PC-9 (cell line): ENCODE measurements at regions of chr21 and their contacts with region 1.

Region 1: GRCh38 chr21:43728467-43729390 is 9.8 kb downstream of the PDXK start:
- DNase-seq: peak; percentile 78 to 87
- H3K4me3 ChIP-seq: peak overlapping the region; percentile 44; the same call in 1 of the 2 replicates
- H3K27ac ChIP-seq: peak overlapping the region; percentile 80
- H3K4me1 ChIP-seq: peaks cover 56% of the 10 kb centered on the region
- H3K27me3 ChIP-seq: no peaks in the 10 kb centered on the region
- CTCF ChIP-seq: no peak

Region 2: GRCh38 chr21:43574741-43575472 is 153.8 kb before region 1 on chr21:
- CTCF ChIA-PET with region 1: no interaction called
- POLR2A ChIA-PET with region 1: no interaction called
- intact Hi-C with region 1: no loop called
- DNase-seq: no peak
- H3K4me3 ChIP-seq: no peak overlapping the region
- H3K27ac ChIP-seq: no peak overlapping the region
- H3K4me1 ChIP-seq: no peaks in the 10 kb centered on the region
- H3K27me3 ChIP-seq: no peaks in the 10 kb centered on the region
- CTCF ChIP-seq: no peak

Region 3: GRCh38 chr21:43659136-43660000 is 69.4 kb before region 1 on chr21 and contains the starts of genes HSF2BP and RRP1B:
- CTCF ChIA-PET with region 1: no interaction called
- POLR2A ChIA-PET with region 1: no interaction called
- intact Hi-C with region 1: loop called (anchors 5 kb)
- DNase-seq: peak; percentile 55 to 73
- H3K4me3 ChIP-seq: peak within 1 kb of the TSS; percentile 91
- H3K27ac ChIP-seq: peak within 1 kb of the TSS; percentile 65
- H3K4me1 ChIP-seq: peaks cover 30% of the 10 kb centered on the region
- H3K27me3 ChIP-seq: no peaks in the 10 kb centered on the region
- CTCF ChIP-seq: no peak
- total RNA-seq, gene HSF2BP: 4.6 and 7.3 TPM in 2 replicates
- total RNA-seq, gene RRP1B: 26.1 and 26.3 TPM in 2 replicates

Region 4: DNA sequence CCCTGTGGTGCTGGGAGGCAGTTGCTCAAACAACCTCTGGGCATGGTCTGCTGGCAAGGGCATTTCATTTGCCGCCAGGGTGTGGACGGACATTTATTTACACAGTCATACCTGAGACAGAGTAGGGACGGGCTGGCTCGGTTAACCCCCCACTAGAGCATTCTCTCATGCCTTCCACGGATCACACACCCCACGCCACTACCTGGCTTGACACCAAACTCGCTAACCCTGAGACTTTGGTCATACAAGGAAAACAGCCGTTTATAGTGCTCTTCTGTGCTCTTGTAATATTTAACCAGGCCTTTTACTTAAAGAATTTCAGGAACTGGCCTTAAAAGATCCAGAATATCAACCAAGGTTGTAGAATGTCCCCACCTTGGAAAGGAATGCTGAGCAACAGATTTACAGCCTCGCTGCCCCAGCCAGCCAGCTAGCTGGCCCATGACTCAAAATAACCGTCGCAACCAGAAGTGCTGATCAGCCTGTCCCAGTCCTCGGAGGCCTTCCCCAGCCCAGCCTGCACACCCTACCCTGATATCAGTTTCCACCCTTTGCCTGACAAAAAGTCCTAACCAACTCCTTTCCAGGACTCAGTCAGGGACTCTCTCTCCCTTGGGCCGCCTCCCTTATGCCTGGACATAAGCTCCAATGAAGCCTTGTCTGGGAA is 16.3 kb before region 1 on chr21:
- CTCF ChIA-PET with region 1: interaction called, 4 read pairs
- POLR2A ChIA-PET with region 1: interaction called, 29 read pairs
- intact Hi-C with region 1: no loop called
- DNase-seq: peak; percentile 84 to 94
- H3K4me3 ChIP-seq: peak overlapping the region; percentile 72; the same call in 1 of the 2 replicates
- H3K27ac ChIP-seq: peak overlapping the region; percentile 100
- H3K4me1 ChIP-seq: peaks cover 29% of the 10 kb centered on the region
- H3K27me3 ChIP-seq: no peaks in the 10 kb centered on the region
- CTCF ChIP-seq: no peak

Region 5: DNA sequence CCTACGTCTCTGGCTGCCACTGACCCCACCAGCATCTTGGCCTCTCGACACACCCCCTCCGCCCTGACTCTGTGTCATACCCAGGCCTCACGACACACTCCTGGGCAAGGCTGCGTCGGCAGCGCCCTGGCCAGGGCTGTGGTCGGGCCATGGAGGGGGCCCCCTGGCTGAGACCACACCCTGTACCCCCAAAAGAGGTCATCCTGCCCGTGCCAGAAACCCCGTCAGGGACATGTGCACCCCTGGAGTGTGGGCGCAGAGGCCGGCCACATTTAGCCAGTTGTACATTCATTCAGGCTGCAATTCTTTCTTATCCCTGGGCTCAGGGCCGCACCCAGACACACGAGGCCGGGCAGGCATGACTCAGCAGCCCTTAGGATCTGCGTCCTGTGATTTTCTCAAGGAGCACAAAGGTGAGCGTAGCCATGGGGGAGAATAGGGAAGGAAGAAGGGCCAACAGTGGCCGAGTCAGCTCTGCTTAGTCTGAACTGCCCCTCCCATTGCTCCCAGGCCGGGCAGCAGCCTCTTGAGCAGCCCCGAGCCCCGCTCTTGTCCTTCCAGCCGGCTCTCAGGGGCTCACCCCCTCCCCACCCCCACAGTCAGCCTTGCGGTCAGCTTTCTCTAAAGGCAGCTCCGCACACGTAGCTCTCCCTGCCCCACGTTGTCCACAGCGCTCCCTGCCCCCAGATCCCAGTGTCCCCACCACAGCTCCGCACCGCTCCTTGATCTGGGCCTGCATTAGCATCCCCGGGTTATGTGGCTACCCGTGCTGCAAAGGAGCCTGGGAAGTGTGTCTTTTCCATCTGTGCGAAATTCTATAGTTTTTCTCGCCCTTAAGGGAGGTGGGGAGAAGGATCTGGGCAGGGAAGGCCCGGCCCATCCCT is 39.5 kb after region 1 on chr21:
- CTCF ChIA-PET with region 1: no interaction called
- POLR2A ChIA-PET with region 1: interaction called, 5 read pairs
- intact Hi-C with region 1: loop called (anchors 2 kb)
- DNase-seq: peak; percentile 84 to 93
- H3K4me3 ChIP-seq: peak overlapping the region; percentile 29; the same call in 1 of the 2 replicates
- H3K27ac ChIP-seq: peak overlapping the region; percentile 98
- H3K4me1 ChIP-seq: peaks cover 33% of the 10 kb centered on the region
- H3K27me3 ChIP-seq: no peaks in the 10 kb centered on the region
- CTCF ChIP-seq: no peak